HCT116 (cell line): ENCODE measurements at regions of chr4 and their contacts with region 1.

Region 1: DNA sequence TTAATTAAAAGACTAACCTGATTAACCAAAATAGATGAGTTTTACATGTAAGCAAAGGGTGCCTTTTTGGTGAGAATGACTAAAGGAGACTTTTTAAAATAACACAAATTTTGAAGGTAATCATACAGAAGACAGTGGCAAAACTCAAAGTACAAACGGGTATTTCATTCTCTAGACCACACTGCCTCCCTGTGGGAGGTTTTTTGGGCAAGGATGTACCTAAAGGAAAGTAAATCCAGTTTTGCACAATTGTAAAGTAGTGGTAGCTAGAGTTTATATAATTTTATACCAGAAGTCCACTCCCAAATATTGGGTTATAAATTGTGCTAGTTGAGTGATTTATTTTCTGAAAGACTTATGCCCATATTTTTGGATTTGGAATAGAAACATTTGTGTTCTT is 201.0 kb downstream of the PAPSS1 start:
- DNase-seq: peak; percentile 19
- ATAC-seq: peak; percentile 62
- H3K4me3 ChIP-seq: no peak overlapping the region
- H3K27ac ChIP-seq: no peak overlapping the region
- H3K4me1 ChIP-seq: no peaks in the 10 kb centered on the region
- H3K27me3 ChIP-seq: no peaks in the 10 kb centered on the region
- CTCF ChIP-seq: peak; percentile 42 to 67 (median 49); a peak in 4 of 6 replicates
- POLR2A ChIP-seq: no peak
- RAD21 ChIP-seq: peak; percentile 72

Region 2: GRCh38 chr4:106690487-106690886 is 828.6 kb before region 1 on chr4:
- CTCF ChIA-PET with region 1: no interaction called
- POLR2A ChIA-PET with region 1: no interaction called
- RAD21 ChIA-PET with region 1: no interaction called
- intact Hi-C with region 1: loop called (anchors 5 kb)
- DNase-seq: no peak
- ATAC-seq: no peak
- H3K4me3 ChIP-seq: no peak overlapping the region
- H3K27ac ChIP-seq: no peak overlapping the region
- H3K4me1 ChIP-seq: no peaks in the 10 kb centered on the region
- H3K27me3 ChIP-seq: no peaks in the 10 kb centered on the region
- CTCF ChIP-seq: no peak
- POLR2A ChIP-seq: no peak
- RAD21 ChIP-seq: no peak

Region 3: GRCh38 chr4:107044170-107044569 is 474.9 kb before region 1 on chr4:
- CTCF ChIA-PET with region 1: no interaction called
- POLR2A ChIA-PET with region 1: no interaction called
- RAD21 ChIA-PET with region 1: no interaction called
- intact Hi-C with region 1: loop called (anchors 5 kb)
- DNase-seq: peak; percentile 12
- ATAC-seq: peak; percentile 55; the same call in 1 of the 2 replicates
- H3K4me3 ChIP-seq: no peak overlapping the region
- H3K27ac ChIP-seq: no peak overlapping the region
- H3K4me1 ChIP-seq: no peaks in the 10 kb centered on the region
- H3K27me3 ChIP-seq: no peaks in the 10 kb centered on the region
- CTCF ChIP-seq: peak in 2 of 3 experiments; percentile 36 to 47; a peak in 4 of 6 replicates
- POLR2A ChIP-seq: no peak
- RAD21 ChIP-seq: peak; percentile 15; the same call in 1 of the 2 replicates

Region 4: DNA sequence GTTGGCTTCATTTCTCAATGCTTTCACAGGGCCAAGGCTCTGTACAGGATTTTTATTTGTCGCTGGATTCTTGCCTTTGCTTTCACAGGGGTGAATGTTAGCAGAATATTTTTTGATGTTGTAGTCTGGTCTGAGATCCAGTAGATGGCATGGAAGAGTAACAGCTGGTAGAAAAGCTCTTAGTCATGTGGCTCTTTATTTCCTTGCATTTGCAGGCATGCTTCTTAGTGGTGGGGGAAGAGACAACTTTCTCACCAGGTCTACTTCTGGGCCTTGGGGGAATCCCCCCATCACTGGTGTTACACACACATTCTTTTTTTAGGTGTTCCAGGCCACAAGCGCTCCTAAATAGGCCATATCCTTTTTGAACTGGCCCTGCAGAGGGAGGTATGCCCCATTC is 424.7 kb before region 1 on chr4:
- CTCF ChIA-PET with region 1: interaction called, 4 read pairs
- POLR2A ChIA-PET with region 1: no interaction called
- RAD21 ChIA-PET with region 1: no interaction called
- intact Hi-C with region 1: loop called (anchors 2 kb)
- DNase-seq: peak; percentile 32
- ATAC-seq: peak; percentile 75
- H3K4me3 ChIP-seq: no peak overlapping the region
- H3K27ac ChIP-seq: no peak overlapping the region
- H3K4me1 ChIP-seq: no peaks in the 10 kb centered on the region
- H3K27me3 ChIP-seq: no peaks in the 10 kb centered on the region
- CTCF ChIP-seq: peak; percentile 48 to 50 (median 49); a peak in 4 of 6 replicates
- POLR2A ChIP-seq: no peak
- RAD21 ChIP-seq: peak; percentile 58

Region 5: GRCh38 chr4:108068442-108068841 is 549.4 kb after region 1 on chr4:
- CTCF ChIA-PET with region 1: no interaction called
- POLR2A ChIA-PET with region 1: no interaction called
- RAD21 ChIA-PET with region 1: no interaction called
- intact Hi-C with region 1: no loop called
- DNase-seq: no peak
- ATAC-seq: no peak
- H3K4me3 ChIP-seq: no peak overlapping the region
- H3K27ac ChIP-seq: no peak overlapping the region
- H3K4me1 ChIP-seq: no peaks in the 10 kb centered on the region
- H3K27me3 ChIP-seq: peaks cover 8% of the 10 kb centered on the region; the same call in 1 of the 2 replicates
- CTCF ChIP-seq: no peak
- POLR2A ChIP-seq: no peak
- RAD21 ChIP-seq: no peak

Region 6: GRCh38 chr4:108080747-108081146 is 561.7 kb after region 1 on chr4:
- CTCF ChIA-PET with region 1: no interaction called
- POLR2A ChIA-PET with region 1: no interaction called
- RAD21 ChIA-PET with region 1: no interaction called
- intact Hi-C with region 1: no loop called
- DNase-seq: no peak
- ATAC-seq: no peak
- H3K4me3 ChIP-seq: no peak overlapping the region
- H3K27ac ChIP-seq: no peak overlapping the region
- H3K4me1 ChIP-seq: no peaks in the 10 kb centered on the region
- H3K27me3 ChIP-seq: peaks cover 19% of the 10 kb centered on the region; the same call in 1 of the 2 replicates
- CTCF ChIP-seq: no peak
- POLR2A ChIP-seq: no peak
- RAD21 ChIP-seq: no peak